Adrenal gland (tissue), 19 donors: ENCODE measurements at regions of chr19 and their contacts with region 1.

Region 1: DNA sequence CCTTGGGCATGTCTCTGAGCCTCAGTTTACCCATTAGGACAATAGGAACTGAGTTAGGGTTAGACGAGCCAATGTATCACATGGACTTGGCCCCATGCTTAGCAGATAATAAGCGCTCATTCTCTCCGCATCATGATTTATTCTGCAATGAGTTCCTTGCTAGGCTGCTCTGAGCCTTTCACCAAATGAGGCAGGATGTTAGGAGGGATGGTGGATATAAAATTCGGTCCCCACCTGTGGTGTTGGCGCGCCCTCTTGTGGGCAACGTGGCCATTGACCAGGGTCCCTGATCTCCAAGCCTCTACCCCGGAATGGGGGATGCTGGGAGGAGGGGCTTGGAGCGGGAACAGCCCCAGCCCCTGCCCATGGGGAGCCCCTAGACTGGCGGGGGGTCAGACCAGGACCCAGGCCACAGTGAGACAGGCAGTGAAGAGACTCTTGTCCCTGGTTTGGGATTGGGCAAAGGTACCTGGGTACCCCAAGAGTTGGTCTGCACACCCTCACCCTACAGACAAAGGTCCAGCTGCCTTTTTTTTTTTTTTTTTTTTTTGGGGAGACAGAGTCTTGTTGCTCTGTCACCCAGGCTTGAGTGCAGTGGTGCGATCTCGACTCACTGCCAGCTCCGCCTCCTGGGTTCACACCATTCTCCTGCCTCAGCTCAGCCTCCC is 43.9 kb downstream of the CERS4 start:
- DNase-seq: peak; percentile 69 to 92 (median 83)
- H3K4me3 ChIP-seq: no peak overlapping the region
- H3K27ac ChIP-seq: no peak overlapping the region
- H3K4me1 ChIP-seq: no peaks in the 10 kb centered on the region
- H3K27me3 ChIP-seq: no peaks in the 10 kb centered on the region
- CTCF ChIP-seq: peak; percentile 95 to 98 (median 96)
- POLR2A ChIP-seq: no peak

Region 2: GRCh38 chr19:7943444-7944176 is 309.4 kb before region 1 on chr19 and contains the start of gene TIMM44:
- intact Hi-C with region 1: loop called in 1 of 2 experiments (anchors 10 kb)
- DNase-seq: peak; percentile 99 to 100 (median 100)
- H3K4me3 ChIP-seq: peak within 1 kb of the TSS; percentile 48 to 97 (median 81)
- H3K27ac ChIP-seq: peak within 1 kb of the TSS; percentile 81 to 97 (median 96)
- H3K4me1 ChIP-seq: peaks cover 7 to 13% of the 10 kb centered on the region in 2 donors
- H3K27me3 ChIP-seq: no peaks in the 10 kb centered on the region
- CTCF ChIP-seq: no peak
- POLR2A ChIP-seq: peak; percentile 56 to 90
- total RNA-seq, gene TIMM44: 48.1 to 88.2 (median 58.9) TPM

Region 3: GRCh38 chr19:7953060-7953459 is 300.0 kb before region 1 on chr19:
- intact Hi-C with region 1: loop called (anchors 10 kb)
- DNase-seq: peak in 1 of 7 donors; percentile 21
- H3K4me3 ChIP-seq: no peak overlapping the region
- H3K27ac ChIP-seq: no peak overlapping the region
- H3K4me1 ChIP-seq: no peaks in the 10 kb centered on the region
- H3K27me3 ChIP-seq: no peaks in the 10 kb centered on the region
- CTCF ChIP-seq: no peak
- POLR2A ChIP-seq: no peak

Region 4: GRCh38 chr19:8158411-8159074 is 94.5 kb before region 1 on chr19:
- intact Hi-C with region 1: loop called (anchors 2 to 5 kb)
- DNase-seq: peak; percentile 34 to 70 (median 64)
- H3K4me3 ChIP-seq: no peak overlapping the region
- H3K27ac ChIP-seq: no peak overlapping the region
- H3K4me1 ChIP-seq: peaks cover 5 to 7% of the 10 kb centered on the region in 2 donors
- H3K27me3 ChIP-seq: no peaks in the 10 kb centered on the region
- CTCF ChIP-seq: peak; percentile 50 to 75 (median 68)
- POLR2A ChIP-seq: no peak

Region 5: DNA sequence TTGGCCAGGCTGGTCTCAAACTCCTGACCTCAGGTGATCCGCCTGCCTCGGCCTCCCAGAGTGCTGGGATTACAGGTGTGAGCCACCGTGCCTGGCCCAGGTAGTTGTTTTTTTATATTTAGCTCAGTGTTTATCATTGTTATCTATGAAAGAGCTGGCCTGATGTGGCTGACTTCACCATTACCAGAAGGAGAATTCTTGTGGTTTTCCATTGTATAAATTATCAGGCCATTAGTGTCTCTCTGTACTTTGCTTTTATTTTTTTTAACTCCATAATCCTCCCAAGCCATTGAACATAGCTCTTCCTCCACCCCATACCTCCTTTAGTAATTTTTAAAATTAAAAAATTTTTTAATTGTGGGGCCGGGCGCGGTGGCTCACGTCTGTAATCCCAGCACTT is 19.7 kb before region 1 on chr19:
- intact Hi-C with region 1: no loop called
- DNase-seq: no peak
- H3K4me3 ChIP-seq: no peak overlapping the region
- H3K27ac ChIP-seq: no peak overlapping the region
- H3K4me1 ChIP-seq: no peaks in the 10 kb centered on the region
- H3K27me3 ChIP-seq: no peaks in the 10 kb centered on the region
- CTCF ChIP-seq: no peak
- POLR2A ChIP-seq: no peak